Psoas muscle (tissue), 8 donors: ENCODE measurements at regions of chr21 and their contacts with region 1.

Region 1: DNA sequence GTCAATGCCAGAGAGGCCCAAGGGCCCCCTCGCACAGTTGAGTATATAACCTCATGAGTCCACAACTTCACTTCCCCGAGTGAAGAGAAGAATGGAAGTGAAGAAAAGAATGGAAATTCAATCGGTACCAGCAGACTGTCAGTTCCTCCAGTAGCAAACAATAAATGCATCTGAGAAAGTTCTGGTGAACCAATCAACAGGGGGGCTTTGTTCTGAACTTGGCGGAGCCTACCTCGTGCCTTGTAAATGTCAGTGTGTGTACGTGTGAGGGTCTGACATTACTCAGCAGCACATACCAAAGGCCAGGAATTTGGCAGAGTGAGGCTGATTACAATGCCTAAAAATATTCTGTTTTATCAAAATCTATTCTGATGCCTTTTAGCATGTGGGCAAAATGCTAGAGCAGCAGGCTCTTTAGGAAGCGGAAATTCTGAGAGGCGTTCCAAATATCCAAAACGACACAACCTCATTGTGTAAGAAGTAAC is 238.5 kb downstream of the LTN1 start:
- DNase-seq: no peak
- ATAC-seq: peak in 3 of 4 donors; percentile 44 to 56 (median 44)
- H3K4me3 ChIP-seq: no peak overlapping the region
- H3K27ac ChIP-seq: peak overlapping the region; percentile 53
- H3K4me1 ChIP-seq: peaks cover 14% of the 10 kb centered on the region
- H3K27me3 ChIP-seq: no peaks in the 10 kb centered on the region
- CTCF ChIP-seq: no peak

Region 2: GRCh38 chr21:28856588-28857250 is 102.5 kb after region 1 on chr21:
- intact Hi-C with region 1: no loop called
- DNase-seq: no peak
- ATAC-seq: no peak
- H3K4me3 ChIP-seq: no peak overlapping the region
- H3K27ac ChIP-seq: no peak overlapping the region
- H3K4me1 ChIP-seq: no peaks in the 10 kb centered on the region
- H3K27me3 ChIP-seq: no peaks in the 10 kb centered on the region
- CTCF ChIP-seq: no peak

Region 3: GRCh38 chr21:28943631-28944030 is 189.5 kb after region 1 on chr21:
- intact Hi-C with region 1: loop called in 1 of 2 experiments (anchors 10 kb)
- DNase-seq: no peak
- ATAC-seq: no peak
- H3K4me3 ChIP-seq: no peak overlapping the region
- H3K27ac ChIP-seq: no peak overlapping the region
- H3K4me1 ChIP-seq: no peaks in the 10 kb centered on the region
- H3K27me3 ChIP-seq: no peaks in the 10 kb centered on the region
- CTCF ChIP-seq: no peak